CD4-positive, alpha-beta memory T cell (primary cell): ENCODE measurements at regions of chr6 and their contacts with region 1.

Region 1: GRCh38 chr6:152301764-152302568 is 335.2 kb downstream of the SYNE1 start:
- DNase-seq: peak; percentile 88 to 92 (median 90)
- H3K4me3 ChIP-seq: peak overlapping the region; percentile 78 to 85
- H3K4me3 Mint-ChIP-seq: peak overlapping the region; percentile 99 to 100 (median 100)
- H3K27ac ChIP-seq: peak overlapping the region; percentile 87
- H3K27ac Mint-ChIP-seq: peak overlapping the region; percentile 95 to 100 (median 98)
- H3K4me1 ChIP-seq: peaks cover 40% of the 10 kb centered on the region
- H3K4me1 Mint-ChIP-seq: peaks cover 29 to 47% (median 36%) of the 10 kb centered on the region in 4 donors
- H3K27me3 ChIP-seq: no peaks in the 10 kb centered on the region
- H3K27me3 Mint-ChIP-seq: no peaks in the 10 kb centered on the region

Region 2: DNA sequence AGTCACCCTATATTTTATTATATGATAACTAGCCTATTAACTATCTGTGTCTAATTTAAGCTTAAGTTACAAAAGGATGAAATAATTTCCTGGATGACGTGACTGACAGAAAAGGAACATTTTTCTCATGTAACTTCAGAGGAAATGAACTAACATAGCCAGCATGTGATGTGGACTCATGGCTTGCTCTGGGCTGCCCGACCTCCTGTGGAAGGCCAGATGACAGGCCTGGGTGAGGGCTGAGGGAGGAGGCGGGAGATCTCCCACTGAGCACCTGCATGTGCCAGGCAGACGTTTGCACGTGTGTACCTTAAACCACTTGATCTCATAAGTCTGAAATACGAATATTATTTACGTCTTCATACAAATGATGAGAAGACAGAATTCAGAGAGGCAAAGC is 14.1 kb after region 1 on chr6:
- CTCF ChIA-PET with region 1: interaction called, 17 read pairs
- POLR2A ChIA-PET with region 1: interaction called, 23 read pairs
- intact Hi-C with region 1: no loop called
- DNase-seq: no peak
- H3K4me3 ChIP-seq: no peak overlapping the region
- H3K4me3 Mint-ChIP-seq: no peak overlapping the region
- H3K27ac ChIP-seq: no peak overlapping the region
- H3K27ac Mint-ChIP-seq: no peak overlapping the region
- H3K4me1 ChIP-seq: peaks cover 1% of the 10 kb centered on the region
- H3K4me1 Mint-ChIP-seq: peaks cover 0 to 4% (median 2%) of the 10 kb centered on the region in 4 donors
- H3K27me3 ChIP-seq: no peaks in the 10 kb centered on the region
- H3K27me3 Mint-ChIP-seq: peaks cover 2 to 7% of the 10 kb centered on the region in 2 donors

Region 3: GRCh38 chr6:152329638-152330448 is 27.9 kb after region 1 on chr6:
- CTCF ChIA-PET with region 1: interaction called, 187 read pairs
- POLR2A ChIA-PET with region 1: no interaction called
- intact Hi-C with region 1: no loop called
- DNase-seq: no peak
- H3K4me3 ChIP-seq: no peak overlapping the region
- H3K4me3 Mint-ChIP-seq: no peak overlapping the region
- H3K27ac ChIP-seq: no peak overlapping the region
- H3K27ac Mint-ChIP-seq: no peak overlapping the region
- H3K4me1 ChIP-seq: no peaks in the 10 kb centered on the region
- H3K4me1 Mint-ChIP-seq: no peaks in the 10 kb centered on the region
- H3K27me3 ChIP-seq: no peaks in the 10 kb centered on the region
- H3K27me3 Mint-ChIP-seq: peaks cover 0 to 2% of the 10 kb centered on the region in 2 donors

Region 4: GRCh38 chr6:152356451-152357061 is 54.6 kb after region 1 on chr6:
- CTCF ChIA-PET with region 1: interaction called, 6 read pairs
- POLR2A ChIA-PET with region 1: interaction called, 3 read pairs
- intact Hi-C with region 1: loop called (anchors 1 kb)
- DNase-seq: peak in 4 of 5 donors; percentile 14 to 33 (median 29)
- H3K4me3 ChIP-seq: no peak overlapping the region
- H3K4me3 Mint-ChIP-seq: no peak overlapping the region
- H3K27ac ChIP-seq: no peak overlapping the region
- H3K27ac Mint-ChIP-seq: no peak overlapping the region
- H3K4me1 ChIP-seq: no peaks in the 10 kb centered on the region
- H3K4me1 Mint-ChIP-seq: peaks cover 0 to 1% (median 0%) of the 10 kb centered on the region in 4 donors
- H3K27me3 ChIP-seq: no peaks in the 10 kb centered on the region
- H3K27me3 Mint-ChIP-seq: no peaks in the 10 kb centered on the region

Region 5: GRCh38 chr6:152380993-152381898 is 79.3 kb after region 1 on chr6:
- CTCF ChIA-PET with region 1: no interaction called
- POLR2A ChIA-PET with region 1: no interaction called
- intact Hi-C with region 1: no loop called
- DNase-seq: no peak
- H3K4me3 ChIP-seq: no peak overlapping the region
- H3K4me3 Mint-ChIP-seq: no peak overlapping the region
- H3K27ac ChIP-seq: no peak overlapping the region
- H3K27ac Mint-ChIP-seq: no peak overlapping the region
- H3K4me1 ChIP-seq: no peaks in the 10 kb centered on the region
- H3K4me1 Mint-ChIP-seq: no peaks in the 10 kb centered on the region
- H3K27me3 ChIP-seq: no peaks in the 10 kb centered on the region
- H3K27me3 Mint-ChIP-seq: peaks cover 0 to 9% of the 10 kb centered on the region in 2 donors

Region 6: DNA sequence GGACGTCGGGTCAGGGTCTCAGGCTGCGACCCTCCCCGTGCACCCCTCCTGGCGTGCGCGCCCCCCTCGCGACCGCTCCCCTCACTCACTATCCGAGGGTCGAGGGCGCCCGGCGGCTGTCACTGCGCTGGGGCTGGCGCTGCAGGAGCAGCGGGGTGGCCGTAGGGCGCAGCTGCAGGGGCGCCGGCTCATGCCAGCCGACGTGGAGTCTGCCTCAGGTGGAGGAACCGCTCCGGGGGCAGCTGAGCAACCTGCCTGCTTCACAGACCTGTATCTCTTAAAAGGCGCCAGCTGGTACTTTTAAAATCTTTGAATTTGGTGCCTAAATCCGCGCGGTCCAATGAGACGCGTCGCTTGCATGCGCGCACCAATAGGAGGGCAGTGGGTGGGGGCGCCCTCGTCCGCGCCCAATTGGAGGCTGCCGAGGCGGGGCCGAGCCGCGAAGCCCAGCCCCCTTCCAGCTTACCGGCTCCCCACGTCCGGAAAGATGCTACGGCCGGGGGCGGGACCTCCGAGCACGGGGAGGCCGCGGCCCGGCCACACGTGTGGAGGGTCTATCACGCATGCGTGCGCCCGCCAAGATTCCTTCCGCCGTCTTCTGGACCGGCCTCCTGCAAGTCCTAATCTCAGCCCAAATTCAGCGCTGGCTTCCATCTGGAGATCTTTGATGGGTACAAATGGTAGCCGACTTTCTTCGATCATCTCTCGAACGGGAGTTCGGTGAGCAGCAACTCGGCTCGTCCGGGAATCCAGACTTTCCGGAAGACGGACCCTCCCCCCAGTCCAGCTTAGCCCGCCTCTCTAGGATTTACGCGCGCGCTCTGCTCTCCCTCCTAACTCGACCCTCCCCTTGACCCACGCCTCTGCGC is 681.0 kb after region 1 on chr6 and contains the start of gene FBXO5:
- CTCF ChIA-PET with region 1: no interaction called
- POLR2A ChIA-PET with region 1: interaction called, 3 read pairs
- intact Hi-C with region 1: loop called (anchors 5 kb)
- DNase-seq: peak; percentile 96 to 98 (median 97)
- H3K4me3 ChIP-seq: peak within 1 kb of the TSS; percentile 64 to 82
- H3K4me3 Mint-ChIP-seq: peak within 1 kb of the TSS; percentile 96 to 99 (median 98)
- H3K27ac ChIP-seq: peak within 1 kb of the TSS; percentile 87
- H3K27ac Mint-ChIP-seq: peak within 1 kb of the TSS; percentile 97 to 99 (median 99)
- H3K4me1 ChIP-seq: peaks cover 43% of the 10 kb centered on the region
- H3K4me1 Mint-ChIP-seq: peaks cover 34 to 66% (median 45%) of the 10 kb centered on the region in 4 donors
- H3K27me3 ChIP-seq: no peaks in the 10 kb centered on the region
- H3K27me3 Mint-ChIP-seq: no peaks in the 10 kb centered on the region
- total RNA-seq, gene FBXO5: 9.9 to 10.4 TPM